Activated T-helper 2 cell treated with anti-CD3 and anti-CD28 coated beads, Interferon-gamma antibody, Interleukin-2, Interleukin-4, amounts not matched to agents 10 μg/mL and 5 μg/mL and 100 μg/mL, durations not matched to agents 14 hours and 24 hours and 36 hours (primary cell): ENCODE measurements at regions of chr16 and their contacts with region 1.

Region 1: DNA sequence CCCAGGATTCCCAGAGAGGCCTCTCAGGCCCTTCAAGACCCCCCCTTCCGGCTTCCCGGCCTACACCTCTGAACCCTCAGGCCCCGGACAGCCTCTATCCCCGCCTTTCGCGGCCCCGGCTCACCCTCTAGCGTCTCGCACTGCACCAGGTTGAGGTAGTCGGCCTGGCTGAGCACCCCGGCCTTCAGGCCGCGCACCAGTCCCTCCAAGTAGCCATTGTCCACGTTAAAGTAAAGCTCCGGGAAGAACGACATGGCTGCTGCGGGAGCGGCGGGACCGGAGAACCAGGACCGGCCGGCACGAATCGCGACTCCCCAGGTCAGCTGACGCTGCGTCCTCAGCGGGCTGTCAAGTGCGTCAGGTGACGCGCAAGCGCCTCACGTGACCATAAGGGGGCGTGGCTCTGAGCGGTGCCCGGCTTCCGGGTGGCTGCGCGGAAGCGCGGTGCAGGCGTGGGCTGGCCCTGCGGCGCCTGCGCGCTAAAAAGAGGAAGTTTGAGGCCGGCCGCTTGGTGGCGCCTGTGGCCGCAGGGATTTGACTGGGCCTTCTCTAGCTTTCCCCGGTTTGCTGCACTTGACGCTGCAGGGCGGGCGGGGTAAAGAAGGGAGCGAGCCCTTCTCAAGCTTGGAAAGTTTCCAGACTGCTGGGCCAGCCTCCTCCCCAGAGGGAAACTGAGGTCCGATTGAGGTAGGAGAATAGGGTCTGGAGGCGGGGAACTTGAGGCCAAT is at the start of gene ATP6V0D1:
- DNase-seq: peak; percentile 99
- H3K4me3 Mint-ChIP-seq: peak within 1 kb of the TSS; percentile 99
- H3K27ac Mint-ChIP-seq: peak within 1 kb of the TSS; percentile 98
- H3K4me1 Mint-ChIP-seq: peaks cover 23% of the 10 kb centered on the region
- H3K27me3 Mint-ChIP-seq: no peaks in the 10 kb centered on the region
- total RNA-seq, gene ATP6V0D1: 31.5 and 33.9 TPM in 2 replicates

Region 2: GRCh38 chr16:67028555-67029248 is 452.3 kb before region 1 on chr16 and contains the start of gene CBFB:
- intact Hi-C with region 1: no loop called
- DNase-seq: peak; percentile 95
- H3K4me3 Mint-ChIP-seq: peak within 1 kb of the TSS; percentile 92
- H3K27ac Mint-ChIP-seq: peak within 1 kb of the TSS; percentile 92
- H3K4me1 Mint-ChIP-seq: peaks cover 46% of the 10 kb centered on the region
- H3K27me3 Mint-ChIP-seq: no peaks in the 10 kb centered on the region
- total RNA-seq, gene CBFB: 156 and 159 TPM in 2 replicates

Region 3: DNA sequence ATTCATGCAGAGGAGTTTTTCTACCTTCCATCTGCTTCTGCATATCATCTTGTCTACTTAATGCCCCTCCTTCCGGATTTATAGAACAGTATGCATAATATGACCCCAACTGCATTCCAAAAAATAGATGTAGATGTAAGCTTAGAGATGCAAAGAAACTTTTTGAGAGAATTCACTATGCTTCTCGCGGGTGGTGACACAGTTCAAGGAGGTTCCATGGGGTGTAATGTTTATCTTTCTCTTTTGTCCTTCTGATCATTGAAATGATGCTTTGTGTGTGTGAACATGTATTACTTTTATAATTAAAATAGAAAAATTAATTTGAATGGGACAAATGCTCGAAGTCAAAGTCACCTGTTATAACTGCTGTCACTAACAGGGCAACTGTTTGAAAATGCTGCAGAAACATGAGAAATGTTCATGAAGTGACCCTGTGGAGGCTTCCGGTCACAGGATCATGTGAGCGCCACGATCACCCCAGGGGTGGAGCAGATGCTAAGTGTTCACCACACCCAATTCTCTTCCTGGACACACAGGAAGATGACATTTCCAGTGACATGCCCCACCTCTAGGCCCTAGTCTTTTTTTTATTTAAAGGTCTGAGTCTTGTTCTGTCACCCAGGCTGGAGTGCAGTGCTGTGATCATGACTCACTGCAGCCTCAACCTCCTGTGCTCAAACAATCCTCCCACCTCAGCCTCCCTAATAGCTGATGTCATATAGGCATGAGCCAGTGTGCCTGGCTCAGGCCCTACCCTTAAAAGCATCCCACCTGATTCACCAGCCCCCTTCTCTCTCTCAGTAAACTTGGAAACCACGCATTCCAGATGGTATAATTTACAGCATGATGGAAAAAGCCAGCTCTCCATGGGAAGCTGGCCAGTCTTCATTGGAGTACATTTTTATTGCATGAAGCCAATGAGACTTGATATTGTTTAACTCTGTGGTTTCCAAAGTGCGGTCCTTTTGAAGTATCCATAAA is 23.3 kb after region 1 on chr16:
- intact Hi-C with region 1: loop called (anchors 1 kb)
- DNase-seq: peak; percentile 67
- H3K4me3 Mint-ChIP-seq: no peak overlapping the region
- H3K27ac Mint-ChIP-seq: peak overlapping the region; percentile 82
- H3K4me1 Mint-ChIP-seq: peaks cover 25% of the 10 kb centered on the region
- H3K27me3 Mint-ChIP-seq: no peaks in the 10 kb centered on the region

Region 4: GRCh38 chr16:67608364-67608763 is 127.4 kb after region 1 on chr16:
- intact Hi-C with region 1: no loop called
- DNase-seq: no peak
- H3K4me3 Mint-ChIP-seq: no peak overlapping the region
- H3K27ac Mint-ChIP-seq: peak overlapping the region; percentile 43
- H3K4me1 Mint-ChIP-seq: peaks cover 7% of the 10 kb centered on the region
- H3K27me3 Mint-ChIP-seq: no peaks in the 10 kb centered on the region